Common myeloid progenitor, CD34-positive (primary cell): ENCODE measurements at regions of chr9 and their contacts with region 1.

Region 1: DNA sequence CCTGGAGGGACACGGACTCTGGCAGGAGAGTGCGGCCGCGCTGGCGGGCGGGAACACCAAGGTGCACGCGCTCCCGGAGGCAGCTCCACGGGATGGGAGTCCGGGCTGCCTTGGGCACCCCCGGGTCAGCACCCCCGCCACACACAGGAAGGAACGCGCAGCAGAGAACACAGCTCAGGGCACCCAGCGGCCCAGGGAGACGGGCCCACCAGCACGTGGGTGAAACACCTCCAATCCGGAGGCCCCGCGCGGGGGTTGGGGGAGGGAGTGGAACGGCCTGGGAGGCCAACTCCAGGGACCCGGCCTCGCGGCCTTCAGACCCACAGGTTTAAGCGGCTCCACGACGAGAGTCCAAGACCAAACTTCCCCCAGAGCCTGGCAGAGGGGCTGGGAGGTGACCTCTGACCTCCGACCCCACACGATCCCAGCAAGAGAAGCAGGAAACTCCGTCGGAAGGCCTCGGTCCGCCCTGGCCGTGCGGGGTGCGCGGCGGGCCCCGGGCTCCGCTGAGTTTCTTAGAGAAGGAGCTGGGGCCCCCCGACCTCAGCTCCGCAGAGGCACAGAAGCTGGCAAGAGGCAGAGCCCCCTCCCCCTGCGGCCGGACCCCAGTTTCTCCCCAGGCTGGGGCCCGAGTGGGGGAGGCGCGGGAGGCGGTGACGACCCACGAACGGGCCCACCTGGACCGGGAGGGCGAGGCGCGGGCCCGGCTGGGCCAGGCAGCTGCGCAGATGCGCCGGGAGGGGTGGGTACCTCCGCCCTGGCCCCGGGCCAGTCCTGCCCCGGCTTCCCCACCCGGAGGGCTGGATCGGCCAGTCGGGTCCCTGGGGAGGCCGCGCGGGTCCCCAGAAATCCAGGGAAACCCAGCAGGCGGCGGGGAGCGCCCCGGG is 851 bp downstream of the NACC2 start:
- DNase-seq: peak in 2 of 3 donors; percentile 53 to 69
- H3K4me3 ChIP-seq: peak overlapping the region; percentile 44 to 78 (median 70)
- H3K27ac ChIP-seq: peak overlapping the region in 1 of 2 experiments; percentile 66
- H3K4me1 ChIP-seq: peaks cover 3 to 58% (median 46%) of the 10 kb centered on the region in 4 experiments
- H3K27me3 ChIP-seq: no peaks in the 10 kb centered on the region

Region 2: DNA sequence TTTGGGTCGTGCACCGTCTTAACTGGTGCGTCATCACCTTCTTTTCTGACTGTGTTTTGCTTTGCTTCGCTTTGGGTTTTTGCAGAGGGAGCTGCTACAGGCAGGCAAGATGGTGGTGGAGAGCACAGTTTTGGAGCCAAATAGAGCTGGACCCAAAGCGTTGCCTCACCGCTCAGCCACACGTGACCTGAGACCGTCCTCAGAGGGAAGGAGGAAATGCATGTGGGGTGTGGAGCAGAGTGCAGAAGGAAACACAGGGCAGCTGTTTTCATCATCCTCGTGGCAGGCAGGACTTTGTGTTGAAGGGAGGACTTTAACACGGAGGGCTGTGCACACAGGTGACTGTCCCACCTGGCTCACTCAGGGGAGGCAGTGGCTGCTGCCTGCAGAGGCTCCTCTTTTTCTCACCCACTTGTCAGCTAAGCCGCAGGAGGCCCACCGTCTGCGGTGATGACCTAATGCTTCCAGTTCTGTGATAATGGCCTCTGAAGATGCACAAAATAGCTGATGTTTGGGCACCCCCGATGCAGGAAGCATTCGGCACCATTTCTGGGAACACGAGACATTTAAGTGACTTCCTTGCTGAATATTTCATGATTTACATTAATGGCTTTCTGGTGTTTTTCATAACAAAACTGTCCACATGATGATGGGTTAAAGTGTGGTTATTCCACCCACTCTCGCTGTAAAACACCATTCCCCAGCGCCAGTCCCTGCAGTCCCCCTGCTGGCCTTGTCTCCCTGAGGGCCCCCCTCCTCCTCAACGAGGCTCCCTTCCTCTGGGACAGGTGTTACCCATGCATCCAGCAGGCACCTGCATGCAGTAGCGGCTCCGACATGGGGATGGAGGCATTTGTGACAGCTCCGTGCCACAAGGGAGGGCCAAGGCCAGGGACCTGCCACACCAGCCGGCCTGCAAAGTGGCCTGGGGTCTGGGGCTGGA is 120.7 kb before region 1 on chr9:
- CTCF ChIA-PET with region 1: interaction called, 17 read pairs
- POLR2A ChIA-PET with region 1: interaction called, 5 read pairs
- DNase-seq: peak in 1 of 3 donors; percentile 51
- H3K4me3 ChIP-seq: no peak overlapping the region
- H3K27ac ChIP-seq: no peak overlapping the region
- H3K4me1 ChIP-seq: peaks cover 13 to 67% (median 47%) of the 10 kb centered on the region in 4 experiments
- H3K27me3 ChIP-seq: no peaks in the 10 kb centered on the region

Region 3: DNA sequence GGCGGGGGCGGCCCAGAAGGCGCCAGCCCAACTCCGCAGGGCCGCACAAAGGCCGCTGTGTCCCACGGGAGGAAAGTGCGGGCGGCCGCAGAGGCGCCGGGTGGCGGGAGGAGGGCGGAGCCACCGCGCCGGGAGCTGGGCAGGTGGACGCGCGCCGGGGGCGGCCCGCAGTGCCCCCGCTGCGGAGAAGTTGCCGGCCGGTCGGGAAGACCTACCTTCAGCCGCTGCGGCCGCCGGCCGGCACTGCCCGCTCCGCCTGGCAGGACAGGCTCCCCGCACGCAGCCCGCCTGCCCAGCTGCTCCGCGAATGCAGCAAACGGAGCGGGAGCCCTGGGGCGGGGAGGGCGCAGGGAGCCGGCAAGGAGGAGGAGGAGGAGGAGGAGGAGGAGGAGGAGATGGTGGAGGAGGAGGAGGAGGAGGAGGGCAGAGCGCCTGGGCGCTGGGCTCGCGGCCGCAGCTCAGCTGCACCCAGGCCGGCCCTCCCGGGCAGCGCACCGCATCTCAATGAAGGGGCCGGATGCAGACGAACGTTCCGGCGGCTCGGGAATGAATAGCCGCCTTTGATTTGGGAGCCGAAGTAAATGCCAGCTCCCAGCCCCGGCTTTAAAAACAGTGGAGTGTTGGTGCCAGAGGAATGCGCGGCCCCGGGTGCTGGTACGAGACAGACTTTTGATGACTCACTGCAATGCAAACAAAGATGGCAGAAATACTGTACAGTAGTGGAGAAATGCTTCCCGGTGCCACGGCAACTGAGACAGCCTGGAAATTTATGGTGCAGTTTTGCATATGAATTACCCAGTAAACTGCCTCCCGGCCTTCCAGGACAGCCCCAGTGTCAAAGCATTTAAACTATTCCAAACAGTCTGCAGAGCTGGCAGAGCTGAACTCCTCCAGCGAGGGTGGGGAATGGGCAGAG is 42.5 kb before region 1 on chr9:
- CTCF ChIA-PET with region 1: no interaction called
- POLR2A ChIA-PET with region 1: no interaction called
- DNase-seq: peak; percentile 36 to 77 (median 66)
- H3K4me3 ChIP-seq: peak overlapping the region; percentile 24 to 77 (median 69)
- H3K27ac ChIP-seq: no peak overlapping the region
- H3K4me1 ChIP-seq: peaks cover 0 to 60% (median 56%) of the 10 kb centered on the region in 4 experiments
- H3K27me3 ChIP-seq: peaks cover 0 to 7% (median 0%) of the 10 kb centered on the region in 5 experiments

Region 4: GRCh38 chr9:136109351-136110081 is 15.3 kb after region 1 on chr9:
- CTCF ChIA-PET with region 1: interaction called, 16 read pairs
- POLR2A ChIA-PET with region 1: interaction called, 4 read pairs
- DNase-seq: peak; percentile 88 to 95 (median 93)
- H3K4me3 ChIP-seq: peak overlapping the region in 6 of 7 experiments; percentile 23 to 70 (median 56)
- H3K27ac ChIP-seq: peak overlapping the region in 1 of 2 experiments; percentile 70
- H3K4me1 ChIP-seq: peaks cover 2 to 83% (median 69%) of the 10 kb centered on the region in 4 experiments
- H3K27me3 ChIP-seq: no peaks in the 10 kb centered on the region

Region 5: DNA sequence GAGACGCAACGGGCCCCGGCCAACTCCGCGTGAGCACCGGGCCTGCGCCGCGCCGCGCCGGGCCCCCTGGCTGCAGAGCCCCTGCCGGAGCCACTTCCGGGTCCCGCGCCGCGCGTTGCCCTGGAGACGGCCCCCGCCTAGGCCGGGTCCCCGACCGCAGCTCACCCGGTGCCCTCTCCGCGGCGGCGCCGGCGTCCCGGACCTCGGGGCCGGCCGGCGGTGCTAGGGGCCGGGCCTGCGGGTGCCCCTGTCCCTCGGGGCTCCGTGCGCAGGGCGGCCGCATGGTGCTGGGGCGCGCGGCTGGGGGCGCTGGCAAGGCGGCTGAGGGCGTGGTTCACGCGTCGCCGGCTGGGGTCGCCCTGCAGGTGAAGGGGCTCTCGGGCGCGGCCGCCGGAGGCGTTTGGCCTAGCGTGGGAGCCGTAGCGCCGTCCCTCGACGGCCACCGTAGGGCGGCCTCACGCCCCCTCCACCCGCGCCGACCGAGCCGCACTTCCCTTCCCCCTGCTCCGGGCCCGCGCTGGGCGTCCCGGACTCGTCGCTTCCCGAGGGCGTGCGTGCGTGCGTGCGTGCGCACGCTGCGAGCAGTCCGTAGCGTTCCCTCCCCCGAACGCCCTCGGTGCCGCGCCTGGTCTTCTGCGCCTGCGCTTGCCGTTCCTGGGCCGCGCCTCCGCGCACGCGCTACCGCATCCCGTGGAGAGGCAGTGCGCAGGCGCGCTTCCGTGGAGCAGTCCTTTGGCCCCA is 24.3 kb after region 1 on chr9 and contains the start of gene TMEM250:
- CTCF ChIA-PET with region 1: interaction called, 36 read pairs
- POLR2A ChIA-PET with region 1: interaction called, 4 read pairs
- DNase-seq: peak; percentile 96 to 98 (median 97)
- H3K4me3 ChIP-seq: peak within 1 kb of the TSS; percentile 57 to 80 (median 77)
- H3K27ac ChIP-seq: peak within 1 kb of the TSS; percentile 54 to 81
- H3K4me1 ChIP-seq: peaks cover 0 to 34% (median 31%) of the 10 kb centered on the region in 4 experiments
- H3K27me3 ChIP-seq: no peaks in the 10 kb centered on the region